Activated B cell treated with CpG ODN at 0.5 μM for 24 hours (primary cell): ENCODE measurements at regions of chr2 and their contacts with region 1.

Region 1: GRCh38 chr2:20661067-20661980 is 5.6 kb upstream of the GDF7 start:
- DNase-seq: peak; percentile 53
- ATAC-seq: peak; percentile 77
- H3K4me3 Mint-ChIP-seq: no peak overlapping the region
- H3K27ac Mint-ChIP-seq: no peak overlapping the region
- H3K4me1 Mint-ChIP-seq: peaks cover 16% of the 10 kb centered on the region
- H3K27me3 Mint-ChIP-seq: peaks cover 16% of the 10 kb centered on the region
- CTCF ChIP-seq: peak; percentile 63

Region 2: DNA sequence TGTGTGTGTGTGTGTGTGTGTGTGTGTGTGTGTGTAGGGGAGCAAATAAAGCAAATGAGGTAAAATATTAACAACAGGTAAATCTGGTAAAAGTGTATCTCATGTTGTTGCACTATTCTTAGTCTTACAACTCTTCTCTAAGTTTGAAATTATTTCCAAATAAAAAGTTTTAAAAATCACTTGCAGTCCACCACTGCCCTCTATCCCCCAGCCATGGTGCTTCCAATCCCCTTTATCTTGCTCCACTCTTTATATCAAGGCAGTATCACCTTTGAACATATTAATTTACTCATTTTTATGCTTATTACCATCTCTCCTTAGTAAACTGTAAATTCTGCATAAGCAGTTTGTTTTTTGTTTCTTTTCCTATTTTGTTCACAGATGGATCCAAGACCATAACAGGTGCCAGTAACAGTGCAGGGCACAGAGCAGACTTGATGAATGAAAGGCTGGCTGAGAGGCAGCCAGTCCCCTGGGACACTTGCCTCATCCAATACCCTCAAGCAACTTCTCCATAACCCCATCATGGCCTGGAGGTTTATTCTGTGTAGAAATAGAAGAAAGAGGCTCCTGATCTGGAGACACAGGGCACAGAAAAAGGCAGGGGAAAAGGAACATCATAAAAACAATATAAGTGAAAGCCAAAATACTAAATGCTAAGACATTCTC is 93.9 kb after region 1 on chr2:
- CTCF ChIA-PET with region 1: interaction called, 6 read pairs
- POLR2A ChIA-PET with region 1: no interaction called
- intact Hi-C with region 1: loop called (anchors 1 kb)
- DNase-seq: no peak
- ATAC-seq: peak; percentile 18
- H3K4me3 Mint-ChIP-seq: no peak overlapping the region
- H3K27ac Mint-ChIP-seq: no peak overlapping the region
- H3K4me1 Mint-ChIP-seq: peaks cover 6% of the 10 kb centered on the region
- H3K27me3 Mint-ChIP-seq: no peaks in the 10 kb centered on the region
- CTCF ChIP-seq: no peak

Region 3: GRCh38 chr2:20877960-20878359 is 216.6 kb after region 1 on chr2:
- CTCF ChIA-PET with region 1: no interaction called
- POLR2A ChIA-PET with region 1: no interaction called
- intact Hi-C with region 1: no loop called
- DNase-seq: no peak
- ATAC-seq: no peak
- H3K4me3 Mint-ChIP-seq: no peak overlapping the region
- H3K27ac Mint-ChIP-seq: no peak overlapping the region
- H3K4me1 Mint-ChIP-seq: no peaks in the 10 kb centered on the region
- H3K27me3 Mint-ChIP-seq: peaks cover 8% of the 10 kb centered on the region
- CTCF ChIP-seq: no peak

Region 4: DNA sequence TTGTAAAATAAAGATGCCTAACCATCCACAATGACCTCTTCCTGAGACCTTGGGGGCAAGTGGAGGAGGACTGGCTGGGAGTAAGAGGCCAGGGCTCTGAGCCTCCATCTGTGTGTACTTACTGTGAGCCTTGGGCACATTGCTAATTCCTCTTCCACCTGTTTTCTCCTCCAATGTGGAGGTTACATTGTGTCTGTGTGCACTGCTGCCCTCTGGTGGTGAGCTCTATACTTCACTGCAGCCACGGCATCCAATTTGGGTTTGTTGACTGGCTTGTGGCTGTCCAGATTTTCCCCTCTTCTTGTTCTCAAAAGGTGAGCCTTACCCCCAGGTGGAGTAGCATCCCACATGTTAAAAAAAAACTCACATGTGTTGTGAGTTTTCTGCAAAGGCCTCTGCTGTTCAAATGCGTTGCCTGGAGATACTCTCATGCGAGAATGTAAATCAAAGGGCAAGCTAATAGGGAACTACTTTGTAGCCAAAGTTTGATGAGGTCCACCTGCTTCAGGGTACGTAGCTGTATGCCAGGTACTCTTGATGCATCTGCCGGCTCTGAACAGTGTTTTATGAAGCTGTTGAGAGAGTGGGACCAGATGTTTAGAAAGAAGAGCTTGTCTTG is 301.7 kb after region 1 on chr2:
- CTCF ChIA-PET with region 1: interaction called, 251 read pairs
- POLR2A ChIA-PET with region 1: interaction called, 11 read pairs
- intact Hi-C with region 1: loop called (anchors 1 kb)
- DNase-seq: peak; percentile 49
- ATAC-seq: peak; percentile 73
- H3K4me3 Mint-ChIP-seq: no peak overlapping the region
- H3K27ac Mint-ChIP-seq: no peak overlapping the region
- H3K4me1 Mint-ChIP-seq: no peaks in the 10 kb centered on the region
- H3K27me3 Mint-ChIP-seq: peaks cover 19% of the 10 kb centered on the region
- CTCF ChIP-seq: peak; percentile 82

Region 5: GRCh38 chr2:21118302-21118920 is 457.1 kb after region 1 on chr2:
- CTCF ChIA-PET with region 1: no interaction called
- POLR2A ChIA-PET with region 1: no interaction called
- intact Hi-C with region 1: loop called (anchors 1 kb)
- DNase-seq: no peak
- ATAC-seq: no peak
- H3K4me3 Mint-ChIP-seq: no peak overlapping the region
- H3K27ac Mint-ChIP-seq: no peak overlapping the region
- H3K4me1 Mint-ChIP-seq: no peaks in the 10 kb centered on the region
- H3K27me3 Mint-ChIP-seq: peaks cover 12% of the 10 kb centered on the region
- CTCF ChIP-seq: no peak